ENCODE measurements at regions of chr2 and their contacts with region 1.

Region 1: GRCh38 chr2:137838255-137839092 is 125.8 kb upstream of the HNMT start:
- DNase-seq: no peak
- H3K4me3 ChIP-seq: no peak overlapping the region
- H3K27ac ChIP-seq: no peak overlapping the region
- H3K4me1 ChIP-seq: no peaks in the 10 kb centered on the region
- H3K27me3 ChIP-seq: no peaks in the 10 kb centered on the region
- CTCF ChIP-seq: peak in 3 of 4 experiments; percentile 40 to 57 (median 45)
- EP300 ChIP-seq: no peak
- POLR2A ChIP-seq: no peak

Region 2: GRCh38 chr2:136423516-136423996 is 1414.9 kb before region 1 on chr2:
- intact Hi-C with region 1: loop called (anchors 5 kb)
- DNase-seq: peak; percentile 73
- H3K4me3 ChIP-seq: peak overlapping the region in 3 of 4 donors; percentile 26 to 44 (median 44)
- H3K27ac ChIP-seq: no peak overlapping the region
- H3K4me1 ChIP-seq: peaks cover 0 to 10% (median 3%) of the 10 kb centered on the region in 4 donors
- H3K27me3 ChIP-seq: peaks cover 0 to 9% (median 0%) of the 10 kb centered on the region in 3 donors
- CTCF ChIP-seq: peak; percentile 42 to 88 (median 76)
- EP300 ChIP-seq: no peak
- POLR2A ChIP-seq: no peak

Region 3: GRCh38 chr2:137644731-137645130 is 193.7 kb before region 1 on chr2:
- intact Hi-C with region 1: no loop called
- DNase-seq: no peak
- H3K4me3 ChIP-seq: no peak overlapping the region
- H3K27ac ChIP-seq: no peak overlapping the region
- H3K4me1 ChIP-seq: no peaks in the 10 kb centered on the region
- H3K27me3 ChIP-seq: no peaks in the 10 kb centered on the region
- CTCF ChIP-seq: no peak
- EP300 ChIP-seq: no peak
- POLR2A ChIP-seq: no peak

Measured in sigmoid colon (tissue), 7 donors.